ENCODE measurements at regions of chr5 and their contacts with region 1.

Region 1: DNA sequence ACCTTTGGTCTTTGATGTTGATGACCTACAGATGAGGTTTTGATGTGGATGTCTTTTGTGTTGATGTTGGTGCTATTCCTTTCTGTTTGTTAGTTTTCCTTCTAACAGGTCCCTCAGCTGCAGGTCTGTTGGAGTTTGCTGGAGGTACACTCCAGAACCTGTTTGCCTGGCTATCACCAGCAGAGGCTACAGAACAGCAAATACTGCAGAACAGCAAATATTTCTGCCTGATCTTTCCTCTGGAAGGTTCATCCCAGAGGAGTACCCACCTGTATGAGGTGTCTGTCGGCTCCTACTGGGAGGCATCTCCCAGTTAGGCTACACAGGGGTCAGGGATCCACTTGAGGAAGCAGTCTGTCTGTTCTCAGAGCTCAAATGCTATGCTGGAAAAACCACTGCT is 694.5 kb upstream of the CDH6 start:
- DNase-seq: no peak
- H3K4me3 Mint-ChIP-seq: no peak overlapping the region
- H3K27ac Mint-ChIP-seq: no peak overlapping the region
- H3K4me1 Mint-ChIP-seq: peaks cover 41% of the 10 kb centered on the region
- H3K27me3 Mint-ChIP-seq: no peaks in the 10 kb centered on the region
- CTCF ChIP-seq: no peak

Region 2: GRCh38 chr5:30458681-30459080 is 40.3 kb before region 1 on chr5:
- CTCF ChIA-PET with region 1: no interaction called
- intact Hi-C with region 1: no loop called
- DNase-seq: no peak
- H3K4me3 Mint-ChIP-seq: no peak overlapping the region
- H3K27ac Mint-ChIP-seq: no peak overlapping the region
- H3K4me1 Mint-ChIP-seq: no peaks in the 10 kb centered on the region
- H3K27me3 Mint-ChIP-seq: no peaks in the 10 kb centered on the region
- CTCF ChIP-seq: no peak

Region 3: DNA sequence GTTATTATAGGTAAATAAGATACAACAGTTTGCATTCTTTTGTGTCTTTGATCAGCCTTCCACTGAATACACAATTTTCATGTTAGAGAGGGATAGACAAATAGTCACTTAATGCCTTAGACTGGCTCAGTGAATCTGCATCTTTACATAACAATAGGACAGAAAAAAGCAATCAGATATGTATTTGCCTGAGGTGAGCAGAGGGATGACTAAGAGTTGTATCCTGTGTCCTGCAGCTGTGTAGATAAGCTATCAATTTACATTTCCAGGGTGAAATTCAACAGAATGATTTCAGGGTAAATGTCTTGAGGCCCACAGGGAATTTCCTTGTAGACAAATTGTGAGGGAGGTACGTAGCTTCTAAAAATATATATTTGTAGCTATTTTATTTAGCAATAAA is 108.3 kb after region 1 on chr5:
- CTCF ChIA-PET with region 1: no interaction called
- intact Hi-C with region 1: no loop called
- DNase-seq: no peak
- H3K4me3 Mint-ChIP-seq: no peak overlapping the region
- H3K27ac Mint-ChIP-seq: no peak overlapping the region
- H3K4me1 Mint-ChIP-seq: no peaks in the 10 kb centered on the region
- H3K27me3 Mint-ChIP-seq: no peaks in the 10 kb centered on the region
- CTCF ChIP-seq: no peak

Region 4: GRCh38 chr5:30736669-30737068 is 237.7 kb after region 1 on chr5:
- CTCF ChIA-PET with region 1: no interaction called
- intact Hi-C with region 1: loop called (anchors 5 kb)
- DNase-seq: no peak
- H3K4me3 Mint-ChIP-seq: no peak overlapping the region
- H3K27ac Mint-ChIP-seq: no peak overlapping the region
- H3K4me1 Mint-ChIP-seq: no peaks in the 10 kb centered on the region
- H3K27me3 Mint-ChIP-seq: no peaks in the 10 kb centered on the region
- CTCF ChIP-seq: no peak

Measured in Calu3 (cell line).